IMR-90 (cell line): ENCODE measurements at regions of chr13 and their contacts with region 1.

Region 1: DNA sequence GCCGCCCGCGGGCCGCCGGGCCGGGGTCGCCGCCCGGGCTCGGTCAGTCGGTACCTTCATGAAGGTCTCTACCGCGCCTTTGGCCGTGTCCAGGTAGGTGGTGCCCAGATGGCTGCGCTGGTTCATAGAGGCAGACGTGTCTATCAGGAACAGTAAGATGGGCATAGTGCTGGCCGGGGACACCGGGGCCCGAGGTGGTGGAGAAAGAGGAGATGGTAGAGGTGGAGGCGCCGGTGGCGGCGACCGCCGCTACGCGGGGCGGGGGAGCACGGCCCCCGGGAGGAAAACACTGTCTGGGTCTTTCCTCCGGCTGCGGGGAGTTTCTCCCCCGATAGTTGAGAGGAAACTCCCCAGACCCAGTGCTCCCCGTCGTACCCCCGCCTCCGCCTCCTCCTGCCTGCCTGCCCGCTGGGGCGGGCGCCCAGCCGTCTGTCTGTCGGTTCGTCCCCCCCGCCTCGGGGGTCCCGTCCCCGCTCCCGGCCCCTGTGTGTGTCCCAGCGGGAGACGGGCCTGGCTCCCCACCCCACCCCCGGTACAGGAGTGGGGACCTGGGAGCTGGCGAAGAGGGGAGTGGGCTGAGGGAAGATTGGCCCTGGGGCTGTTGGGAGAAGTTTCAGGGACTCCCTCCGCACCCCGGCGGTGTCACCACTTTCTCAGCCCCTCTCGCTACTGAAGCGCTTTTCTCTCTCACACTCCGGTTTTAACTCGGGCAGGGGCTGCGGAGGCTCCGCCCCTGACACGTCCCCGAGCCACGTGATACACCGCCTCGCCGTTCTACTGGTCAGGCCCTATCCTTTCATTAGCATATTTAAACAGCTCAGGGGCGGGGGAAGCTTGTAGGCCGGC is at the start of gene INTS6:
- DNase-seq: peak; percentile 99
- ATAC-seq: peak; percentile 88
- H3K4me3 ChIP-seq: peak within 1 kb of the TSS; percentile 91
- H3K27ac ChIP-seq: peak within 1 kb of the TSS; percentile 98
- H3K4me1 ChIP-seq: peaks cover 2% of the 10 kb centered on the region; the same call in 1 of the 2 replicates
- H3K27me3 ChIP-seq: no peaks in the 10 kb centered on the region
- CTCF ChIP-seq: no peak
- POLR2A ChIP-seq: peak; percentile 100
- RAD21 ChIP-seq: peak; percentile 30
- total RNA-seq, gene INTS6: 42.3 and 43.0 TPM in 2 replicates

Region 2: GRCh38 chr13:51523082-51523518 is 70.5 kb after region 1 on chr13:
- CTCF ChIA-PET with region 1: no interaction called
- POLR2A ChIA-PET with region 1: interaction called, 3 read pairs
- dilution Hi-C with region 1: no loop called
- in situ Hi-C with region 1: no loop called
- intact Hi-C with region 1: loop called (anchors 5 kb)
- DNase-seq: peak; percentile 69
- ATAC-seq: peak; percentile 12; the same call in 1 of the 2 replicates
- H3K4me3 ChIP-seq: no peak overlapping the region
- H3K27ac ChIP-seq: peak overlapping the region; percentile 70
- H3K4me1 ChIP-seq: peaks cover 25% of the 10 kb centered on the region
- H3K27me3 ChIP-seq: no peaks in the 10 kb centered on the region
- CTCF ChIP-seq: no peak
- POLR2A ChIP-seq: no peak
- RAD21 ChIP-seq: no peak

Region 3: GRCh38 chr13:51645154-51645650 is 192.6 kb after region 1 on chr13:
- CTCF ChIA-PET with region 1: no interaction called
- POLR2A ChIA-PET with region 1: interaction called, 4 read pairs
- dilution Hi-C with region 1: no loop called
- in situ Hi-C with region 1: no loop called
- intact Hi-C with region 1: loop called (anchors 2 kb)
- DNase-seq: peak; percentile 57
- ATAC-seq: no peak
- H3K4me3 ChIP-seq: no peak overlapping the region
- H3K27ac ChIP-seq: peak overlapping the region; percentile 39; the same call in 1 of the 2 replicates
- H3K4me1 ChIP-seq: peaks cover 15% of the 10 kb centered on the region
- H3K27me3 ChIP-seq: no peaks in the 10 kb centered on the region
- CTCF ChIP-seq: no peak
- POLR2A ChIP-seq: no peak
- RAD21 ChIP-seq: no peak

Region 4: DNA sequence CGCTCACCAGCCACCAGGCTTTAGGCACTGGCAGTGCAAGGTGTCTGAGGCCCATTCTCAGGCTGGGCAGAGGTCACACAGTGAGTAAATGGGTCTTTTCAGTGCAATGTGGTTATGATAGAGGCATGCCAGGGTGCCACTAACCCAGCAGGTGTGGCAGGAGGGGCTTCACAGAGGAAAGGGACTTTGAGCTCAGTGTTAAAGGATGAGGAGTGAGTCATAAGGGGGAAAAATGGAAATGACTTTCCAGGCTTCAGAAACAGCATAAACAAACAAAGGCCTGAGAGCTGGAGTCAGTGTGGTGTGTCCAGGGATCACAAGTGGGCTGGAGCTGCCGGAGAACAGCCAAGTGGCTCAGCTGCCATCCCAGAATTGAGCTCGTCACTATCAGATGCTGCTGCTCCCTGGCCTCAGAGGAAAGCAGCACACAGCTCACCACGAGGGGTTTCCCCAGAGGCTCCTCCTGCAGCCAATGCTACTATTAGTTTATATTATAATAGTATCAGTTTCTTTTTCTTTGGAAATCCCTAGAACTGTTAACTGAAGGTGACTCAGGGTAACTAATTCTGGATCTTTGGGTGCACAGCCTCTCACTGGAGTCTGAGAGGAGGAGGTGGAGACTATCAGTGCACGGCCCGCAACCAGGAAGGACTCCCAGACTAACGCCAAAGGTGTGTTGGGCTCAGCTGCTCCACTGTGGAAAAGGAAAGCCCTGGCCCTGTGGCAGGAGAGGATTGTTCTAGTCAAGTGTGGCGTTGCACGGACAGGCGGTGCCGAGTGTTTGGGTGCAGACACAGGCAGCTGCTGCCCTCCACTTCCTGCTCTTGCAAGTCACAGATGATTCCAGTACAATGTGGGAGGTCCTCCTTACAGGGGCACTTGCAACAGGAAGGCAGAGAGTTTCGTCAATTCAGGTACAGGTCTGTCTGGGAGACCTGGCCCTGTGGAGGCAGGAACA is 311.9 kb after region 1 on chr13:
- CTCF ChIA-PET with region 1: no interaction called
- POLR2A ChIA-PET with region 1: no interaction called
- dilution Hi-C with region 1: no loop called
- in situ Hi-C with region 1: no loop called
- intact Hi-C with region 1: loop called (anchors 10 kb)
- DNase-seq: peak; percentile 97
- ATAC-seq: peak; percentile 92
- H3K4me3 ChIP-seq: peak overlapping the region; percentile 9; the same call in 1 of the 2 replicates
- H3K27ac ChIP-seq: peak overlapping the region; percentile 49
- H3K4me1 ChIP-seq: peaks cover 21% of the 10 kb centered on the region
- H3K27me3 ChIP-seq: no peaks in the 10 kb centered on the region
- CTCF ChIP-seq: 0 out of 2 replicates have a peak, but pooled peaks have one; percentile 15
- POLR2A ChIP-seq: no peak
- RAD21 ChIP-seq: peak; percentile 44; the same call in 1 of the 2 replicates

Region 5: DNA sequence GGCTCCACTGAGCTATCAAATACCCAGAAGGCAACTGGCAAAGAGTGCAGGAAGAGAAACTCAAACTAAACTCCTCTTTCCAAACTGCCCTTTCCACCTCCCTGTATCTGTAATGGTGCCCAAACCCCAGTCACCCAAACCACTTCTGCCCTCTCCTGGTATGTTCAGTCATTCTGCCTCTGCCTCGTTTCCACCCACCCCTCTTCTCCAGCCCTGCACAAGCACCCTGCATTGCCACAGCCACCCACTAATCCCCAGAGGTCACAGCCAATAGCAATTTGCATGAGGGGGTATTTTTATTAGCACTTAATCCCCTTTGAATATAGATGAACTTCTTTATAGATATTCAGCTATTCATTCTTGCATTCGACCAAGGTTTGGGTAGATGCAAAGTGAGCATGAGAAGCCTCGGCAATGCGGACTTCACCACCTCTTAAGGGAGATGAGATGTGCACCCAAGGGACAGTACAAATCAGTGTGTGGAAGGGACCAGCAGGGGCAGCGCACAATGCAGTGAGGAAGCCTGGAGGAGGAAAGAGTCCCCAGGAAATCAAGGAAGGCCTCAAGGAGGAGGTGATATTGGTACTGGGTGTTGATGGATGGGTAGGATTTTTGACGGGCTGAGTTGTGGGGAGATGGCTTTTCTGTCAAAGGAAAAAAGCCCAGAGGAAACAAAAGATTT is 380.0 kb after region 1 on chr13:
- CTCF ChIA-PET with region 1: no interaction called
- POLR2A ChIA-PET with region 1: no interaction called
- dilution Hi-C with region 1: no loop called
- in situ Hi-C with region 1: no loop called
- intact Hi-C with region 1: no loop called
- DNase-seq: peak; percentile 8
- ATAC-seq: peak; percentile 70
- H3K4me3 ChIP-seq: no peak overlapping the region
- H3K27ac ChIP-seq: no peak overlapping the region
- H3K4me1 ChIP-seq: no peaks in the 10 kb centered on the region
- H3K27me3 ChIP-seq: peaks cover 52% of the 10 kb centered on the region
- CTCF ChIP-seq: peak; percentile 38
- POLR2A ChIP-seq: no peak
- RAD21 ChIP-seq: peak; percentile 55

Region 6: DNA sequence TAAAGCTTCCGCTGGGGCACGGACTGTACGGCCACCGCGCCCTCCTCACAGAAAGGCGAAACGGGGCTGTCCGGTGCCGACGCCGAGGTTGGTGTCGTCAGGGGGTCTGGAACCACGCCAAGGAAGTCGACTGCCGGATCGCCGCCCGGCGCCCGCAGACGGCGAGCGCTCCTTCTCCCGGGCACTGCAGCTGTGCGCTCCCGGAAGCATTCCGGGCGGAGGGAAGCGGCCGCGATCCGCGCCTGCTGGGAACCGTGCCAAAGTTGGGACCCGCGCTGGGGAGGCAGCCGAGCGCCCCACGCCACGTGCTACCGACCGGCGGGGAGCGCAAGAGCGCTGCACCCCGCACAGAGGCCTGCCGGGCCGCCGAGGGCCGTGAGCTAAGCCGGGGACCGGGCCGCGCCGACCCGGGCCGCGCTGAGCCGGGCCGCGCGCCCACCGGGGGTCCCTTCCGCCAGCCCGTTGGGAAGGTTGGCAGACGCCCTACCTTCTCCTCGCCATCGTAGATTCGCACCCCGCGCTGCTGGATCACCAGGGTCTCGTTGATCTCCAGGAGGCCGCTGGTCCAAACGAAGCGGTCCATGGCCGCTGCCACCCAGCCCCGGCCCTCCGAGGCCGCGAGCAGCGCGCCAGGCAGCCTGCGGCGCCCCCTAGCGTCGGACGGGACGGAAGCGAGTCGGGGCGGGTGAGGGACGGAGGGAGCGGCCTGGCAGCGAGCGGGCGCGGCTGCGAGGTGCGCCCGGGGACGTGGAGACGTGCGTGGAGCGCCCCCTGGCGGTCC is 997.6 kb after region 1 on chr13 and contains the start of gene VPS36:
- CTCF ChIA-PET with region 1: no interaction called
- POLR2A ChIA-PET with region 1: no interaction called
- dilution Hi-C with region 1: no loop called
- in situ Hi-C with region 1: no loop called
- intact Hi-C with region 1: loop called (anchors 10 kb)
- DNase-seq: peak; percentile 92
- ATAC-seq: peak; percentile 86
- H3K4me3 ChIP-seq: peak within 1 kb of the TSS; percentile 73
- H3K27ac ChIP-seq: peak within 1 kb of the TSS; percentile 83
- H3K4me1 ChIP-seq: peaks cover 7% of the 10 kb centered on the region
- H3K27me3 ChIP-seq: no peaks in the 10 kb centered on the region
- CTCF ChIP-seq: peak; percentile 99
- POLR2A ChIP-seq: peak; percentile 85
- RAD21 ChIP-seq: peak; percentile 86
- total RNA-seq, gene VPS36: 16.7 and 23.1 TPM in 2 replicates